ENCODE measurements at regions of chr2 and their contacts with region 1.

Region 1: DNA sequence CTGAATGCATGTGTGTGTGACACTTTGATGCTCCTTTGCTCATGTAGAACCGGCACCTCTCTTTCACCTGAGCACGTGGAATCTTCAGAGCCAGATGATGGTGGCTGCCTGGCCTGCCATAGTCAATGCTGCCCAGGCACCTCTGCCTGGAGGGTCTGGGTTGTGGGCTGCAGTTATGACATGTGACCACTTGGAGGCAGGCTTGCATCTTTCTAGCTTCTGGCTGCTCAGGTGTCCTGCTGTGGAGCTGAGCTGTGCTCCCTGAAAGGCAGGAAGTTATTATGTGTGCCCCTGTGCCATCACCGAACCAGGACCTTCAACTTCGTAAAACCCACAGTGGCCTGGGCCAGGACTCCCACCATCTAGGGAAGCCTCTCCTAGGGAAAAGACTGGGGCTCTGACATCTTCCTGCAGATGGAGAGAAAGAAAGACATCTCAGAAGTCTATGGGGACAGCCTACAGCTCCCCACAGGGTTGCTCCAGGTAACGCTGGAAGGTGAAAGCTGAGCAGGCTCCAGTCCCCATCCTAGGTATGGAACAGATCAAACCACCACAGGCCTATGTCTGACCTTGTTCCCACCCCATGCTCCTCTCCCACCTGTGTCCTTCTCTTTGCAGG is 30.2 kb downstream of the PSD4 start:
- DNase-seq: peak; percentile 38 to 83 (median 74)
- H3K4me3 ChIP-seq: no peak overlapping the region
- H3K27ac ChIP-seq: no peak overlapping the region
- H3K27me3 ChIP-seq: no peaks in the 10 kb centered on the region
- CTCF ChIP-seq: peak; percentile 38 to 95 (median 87)

Region 2: DNA sequence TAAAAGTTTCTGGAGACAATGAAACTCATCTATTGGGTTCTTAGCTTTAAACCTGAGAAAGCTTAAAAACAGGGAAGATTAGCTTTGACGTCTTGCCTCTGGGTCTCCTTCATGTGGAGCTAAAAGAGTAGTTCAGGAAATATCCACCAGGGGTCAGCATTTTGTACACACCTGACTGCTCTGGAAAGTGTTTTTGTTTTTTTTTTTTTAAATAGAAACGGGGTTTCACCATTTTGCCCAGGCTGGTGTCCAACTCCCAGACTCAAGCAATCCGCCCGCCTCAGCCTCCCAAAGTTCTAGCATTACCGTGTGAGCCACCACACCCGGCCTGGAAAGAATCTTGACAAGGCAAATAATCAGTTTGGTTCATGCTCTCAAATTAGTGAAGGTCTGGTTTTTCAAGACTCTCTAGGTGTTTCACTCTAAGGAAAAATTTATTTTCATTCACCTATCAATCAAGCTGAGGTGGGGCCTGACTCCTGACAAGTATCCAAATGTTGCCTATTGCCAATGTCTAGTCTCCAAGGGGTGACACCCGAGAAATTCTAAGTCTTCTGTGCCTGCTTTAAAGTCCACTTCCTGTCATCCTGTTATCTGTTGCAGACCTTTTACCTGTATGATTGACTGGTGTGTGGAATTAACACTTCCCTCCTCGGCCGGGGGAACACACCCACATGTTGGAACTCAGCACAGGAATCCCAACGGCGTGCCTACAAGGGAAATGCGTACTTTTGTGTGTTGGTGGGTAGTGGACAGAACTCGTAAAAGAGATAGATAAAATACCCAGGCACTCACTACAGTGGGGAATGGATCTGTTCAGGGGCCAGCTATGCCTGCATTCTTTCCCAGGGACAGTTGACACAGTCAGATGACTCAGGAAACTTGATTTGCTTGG is 65.3 kb before region 1 on chr2:
- intact Hi-C with region 1: loop called (anchors 5 kb)
- DNase-seq: peak in 1 of 10 donors; percentile 26
- H3K4me3 ChIP-seq: no peak overlapping the region
- H3K27ac ChIP-seq: no peak overlapping the region
- H3K27me3 ChIP-seq: no peaks in the 10 kb centered on the region
- CTCF ChIP-seq: peak; percentile 74 to 94 (median 86)

Region 3: GRCh38 chr2:113234721-113235346 is 30.8 kb after region 1 on chr2:
- intact Hi-C with region 1: loop called in 1 of 2 experiments (anchors 5 kb)
- DNase-seq: no peak
- H3K4me3 ChIP-seq: peak overlapping the region in 40 of 59 donors; percentile 3 to 65 (median 52)
- H3K27ac ChIP-seq: peak overlapping the region in 5 of 59 donors; percentile 22 to 58 (median 50)
- H3K27me3 ChIP-seq: no peaks in the 10 kb centered on the region
- CTCF ChIP-seq: no peak

Region 4: DNA sequence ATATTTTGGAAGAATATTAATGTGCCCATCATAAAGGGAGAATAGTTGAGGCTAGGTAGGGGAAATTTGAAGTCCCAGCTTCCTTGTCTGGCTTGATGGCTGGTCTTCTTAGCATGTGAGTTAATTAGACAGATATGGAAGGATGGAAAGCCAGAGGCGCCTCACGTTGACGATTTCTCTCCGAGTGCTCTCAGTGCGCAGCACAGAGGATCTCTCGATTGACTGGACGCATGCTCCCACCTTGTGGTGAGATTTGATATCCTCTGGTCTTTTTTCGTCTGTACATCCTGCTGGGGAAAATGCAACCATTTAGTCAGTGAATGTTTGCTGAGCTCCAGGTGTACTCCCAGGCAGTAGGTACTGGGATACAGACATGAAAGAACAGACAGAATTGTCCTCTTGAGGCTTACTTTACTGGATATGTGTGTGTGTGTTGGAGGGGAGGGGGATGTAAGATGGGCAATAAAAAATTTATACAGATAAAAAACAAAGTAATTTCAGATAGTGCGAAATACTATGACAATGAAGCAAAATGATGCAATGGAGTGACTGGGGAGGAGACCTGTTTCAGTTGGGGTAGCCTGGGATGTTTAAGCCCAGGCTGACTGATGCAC is 166.6 kb after region 1 on chr2:
- intact Hi-C with region 1: loop called (anchors 2 to 5 kb)
- DNase-seq: peak; percentile 24 to 76 (median 66)
- H3K4me3 ChIP-seq: no peak overlapping the region
- H3K27ac ChIP-seq: no peak overlapping the region
- H3K27me3 ChIP-seq: no peaks in the 10 kb centered on the region
- CTCF ChIP-seq: peak; percentile 47 to 91 (median 82)

Region 5: DNA sequence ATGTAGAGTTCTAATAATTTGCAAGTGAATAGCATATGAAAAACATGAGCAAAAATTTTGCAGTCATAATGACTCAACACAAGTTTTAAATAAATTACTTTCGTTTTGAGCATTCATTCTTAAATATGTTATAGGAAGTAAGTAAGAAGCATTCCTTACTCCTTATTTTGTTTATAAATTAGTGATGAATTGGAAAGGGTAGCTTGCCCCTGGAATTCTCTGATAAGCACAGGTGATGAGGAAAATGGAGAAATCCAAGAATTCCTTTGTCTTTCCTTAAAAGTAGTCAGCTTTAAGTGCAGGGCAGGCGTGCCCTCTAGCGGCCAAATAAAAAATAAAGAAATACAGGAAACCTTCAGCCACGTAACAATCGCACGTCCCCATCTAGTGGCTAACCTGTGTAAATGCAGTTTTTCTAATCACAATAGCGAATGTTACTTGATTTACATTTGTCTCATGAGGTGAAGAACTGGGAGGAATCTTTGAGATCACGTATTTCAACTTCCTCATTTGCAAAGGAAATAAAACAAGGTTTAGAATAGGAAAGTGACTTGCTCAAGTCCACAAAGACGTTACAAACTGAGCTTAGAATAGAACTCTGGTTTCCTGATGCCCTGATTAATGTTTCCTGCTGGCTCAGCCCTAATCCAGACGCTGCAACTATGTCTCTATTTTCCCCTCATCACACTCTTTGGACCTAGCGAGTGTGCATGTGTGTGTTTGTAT is 186.3 kb after region 1 on chr2:
- intact Hi-C with region 1: loop called (anchors 5 kb)
- DNase-seq: peak in 7 of 10 donors; percentile 30 to 70 (median 53)
- H3K4me3 ChIP-seq: peak overlapping the region in 12 of 59 donors; percentile 4 to 35 (median 26)
- H3K27ac ChIP-seq: peak overlapping the region in 5 of 59 donors; percentile 2 to 32 (median 23)
- H3K27me3 ChIP-seq: peaks cover 0 to 6% (median 0%) of the 10 kb centered on the region in 45 donors
- CTCF ChIP-seq: peak; percentile 75 to 100 (median 97)

Region 6: DNA sequence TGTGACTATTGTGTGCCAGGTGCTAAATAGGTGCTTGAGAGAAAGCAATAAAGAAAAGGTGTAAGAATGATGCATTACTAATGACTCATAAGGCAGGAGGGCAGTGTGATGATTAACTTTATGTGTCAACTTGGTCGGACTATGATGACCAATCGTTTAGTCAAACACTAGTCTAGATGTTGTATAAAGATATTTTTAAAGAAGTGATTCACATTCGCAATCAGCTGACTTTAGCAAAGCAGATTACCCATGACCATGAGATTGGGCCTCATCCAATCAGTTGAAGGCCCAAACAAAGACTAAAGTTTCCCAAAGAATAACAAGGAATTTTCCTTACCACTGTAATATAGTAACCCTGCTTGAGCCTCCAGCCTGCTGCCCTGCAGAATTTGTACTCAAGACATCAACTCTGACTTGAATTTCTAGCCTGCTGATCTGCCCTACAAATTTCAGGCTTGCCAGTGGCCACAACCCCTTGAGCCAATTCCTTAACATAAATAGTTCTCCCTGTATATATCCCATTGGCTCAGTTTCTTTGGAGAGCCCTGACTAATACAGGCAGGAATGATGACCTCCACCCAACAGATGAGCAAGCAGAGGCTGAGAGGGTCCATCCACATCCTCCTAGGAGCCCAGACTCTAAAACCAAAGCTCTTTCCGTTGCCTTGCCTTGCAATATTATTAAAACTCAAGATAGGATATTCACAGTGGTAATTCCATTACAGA is 818.5 kb after region 1 on chr2:
- intact Hi-C with region 1: no loop called
- DNase-seq: no peak
- H3K4me3 ChIP-seq: no peak overlapping the region
- H3K27ac ChIP-seq: no peak overlapping the region
- H3K27me3 ChIP-seq: peaks cover 0 to 6% (median 0%) of the 10 kb centered on the region in 45 donors
- CTCF ChIP-seq: no peak